HepG2 (cell line): ENCODE measurements at regions of chr2 and their contacts with region 1.

Region 1: GRCh38 chr2:40072442-40073232 is 293.6 kb upstream of the THUMPD2 start:
- DNase-seq: no peak
- ATAC-seq: no peak
- H3K4me3 ChIP-seq: no peak overlapping the region
- H3K27ac ChIP-seq: no peak overlapping the region
- H3K4me1 ChIP-seq: no peaks in the 10 kb centered on the region
- H3K27me3 ChIP-seq: no peaks in the 10 kb centered on the region
- CTCF ChIP-seq: no peak
- EP300 ChIP-seq: no peak
- POLR2A ChIP-seq: no peak
- RAD21 ChIP-seq: no peak

Region 2: DNA sequence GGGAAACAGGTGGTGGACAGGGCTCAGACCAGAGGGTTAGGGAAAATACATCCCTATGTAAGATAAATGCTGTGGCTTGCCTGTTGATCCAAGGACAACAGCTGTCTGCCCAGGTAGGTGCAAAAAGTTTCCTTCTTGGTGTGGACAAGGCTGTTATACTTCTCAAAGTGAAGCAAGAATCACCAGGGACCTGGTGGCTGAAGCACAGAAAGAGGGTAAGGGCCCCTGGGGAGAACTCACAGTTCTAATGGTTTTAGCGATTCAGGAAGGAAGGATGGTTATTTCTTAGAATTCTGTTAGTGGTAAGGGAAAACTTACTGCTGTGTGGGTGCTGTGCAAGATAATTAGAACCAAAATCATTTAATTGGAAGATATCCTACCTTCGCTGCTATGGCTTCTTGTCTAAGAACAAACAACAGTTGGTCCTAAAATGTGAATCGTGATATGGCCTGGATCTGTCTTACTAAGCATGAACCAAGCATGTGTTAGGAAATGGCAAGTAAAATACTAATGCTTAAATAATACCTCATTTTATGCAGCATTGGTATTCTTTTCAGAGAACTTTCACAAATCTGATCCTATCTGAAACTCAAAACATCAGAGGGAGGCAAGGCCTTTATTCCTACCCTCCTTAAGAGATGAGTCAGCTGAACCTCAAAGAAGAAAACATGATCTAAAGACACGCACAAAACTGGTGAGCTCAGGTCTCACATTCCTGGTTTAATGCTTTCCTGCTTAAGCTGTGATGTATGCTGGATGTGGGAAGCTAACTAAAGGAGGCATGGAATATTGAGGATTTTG is 134.4 kb before region 1 on chr2:
- CTCF ChIA-PET with region 1: no interaction called
- POLR2A ChIA-PET with region 1: no interaction called
- in situ Hi-C with region 1: no loop called
- intact Hi-C with region 1: loop called (anchors 5 kb)
- DNase-seq: no peak
- ATAC-seq: no peak
- H3K4me3 ChIP-seq: no peak overlapping the region
- H3K27ac ChIP-seq: no peak overlapping the region
- H3K4me1 ChIP-seq: no peaks in the 10 kb centered on the region
- H3K27me3 ChIP-seq: no peaks in the 10 kb centered on the region
- CTCF ChIP-seq: no peak
- EP300 ChIP-seq: no peak
- POLR2A ChIP-seq: no peak
- RAD21 ChIP-seq: no peak

Region 3: GRCh38 chr2:40797115-40797514 is 724.5 kb after region 1 on chr2:
- CTCF ChIA-PET with region 1: no interaction called
- POLR2A ChIA-PET with region 1: no interaction called
- in situ Hi-C with region 1: no loop called
- intact Hi-C with region 1: no loop called
- DNase-seq: no peak
- ATAC-seq: no peak
- H3K4me3 ChIP-seq: no peak overlapping the region
- H3K27ac ChIP-seq: no peak overlapping the region
- H3K4me1 ChIP-seq: no peaks in the 10 kb centered on the region
- H3K27me3 ChIP-seq: no peaks in the 10 kb centered on the region
- CTCF ChIP-seq: no peak
- EP300 ChIP-seq: no peak
- POLR2A ChIP-seq: no peak
- RAD21 ChIP-seq: no peak